Stomach (tissue), 19 donors: ENCODE measurements at regions of chr1 and their contacts with region 1.

Region 1: DNA sequence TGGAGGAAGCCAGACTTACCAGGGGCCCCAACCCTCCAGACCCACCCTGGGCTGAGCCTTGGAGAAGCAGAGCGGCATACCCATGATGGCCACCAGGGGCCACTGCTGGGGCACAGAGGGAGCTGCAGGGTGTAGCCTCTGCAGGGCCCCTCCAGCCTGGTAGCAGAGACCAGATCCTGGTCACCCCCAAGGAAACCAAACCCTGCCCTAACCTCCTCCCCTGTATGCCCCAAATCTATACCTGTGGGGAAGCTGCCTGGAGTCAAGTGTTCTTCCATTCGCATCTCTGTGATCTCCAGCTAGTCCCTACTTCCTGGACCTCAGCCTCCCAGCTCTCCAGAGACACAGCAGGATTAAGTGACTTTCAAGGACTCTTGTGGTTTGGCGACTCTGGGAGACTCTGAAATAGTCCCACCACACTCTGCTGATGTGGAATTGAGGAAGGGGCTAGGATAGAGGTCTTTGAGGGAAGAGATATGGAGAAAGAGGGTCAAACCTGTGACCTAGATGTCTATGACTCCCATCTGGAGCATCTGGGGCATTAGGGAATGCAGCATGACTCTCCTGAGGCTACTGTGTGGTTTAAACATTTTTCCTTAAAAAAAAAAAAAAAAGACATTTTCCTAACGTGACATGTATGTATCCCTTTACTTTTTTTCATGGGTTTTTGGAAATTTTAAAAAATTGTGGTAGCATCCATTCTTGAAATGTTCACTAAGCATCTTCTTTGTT is 119.2 kb upstream of the IPO9 start:
- DNase-seq: peak; percentile 74 to 83
- H3K4me3 ChIP-seq: no peak overlapping the region
- H3K27ac ChIP-seq: peak overlapping the region in 4 of 5 donors; percentile 14 to 90 (median 44)
- H3K4me1 ChIP-seq: peaks cover 22 to 48% (median 39%) of the 10 kb centered on the region in 4 donors
- H3K27me3 ChIP-seq: no peaks in the 10 kb centered on the region
- CTCF ChIP-seq: peak in 5 of 7 experiments; percentile 67 to 93 (median 86)
- EP300 ChIP-seq: no peak
- POLR2A ChIP-seq: no peak

Region 2: DNA sequence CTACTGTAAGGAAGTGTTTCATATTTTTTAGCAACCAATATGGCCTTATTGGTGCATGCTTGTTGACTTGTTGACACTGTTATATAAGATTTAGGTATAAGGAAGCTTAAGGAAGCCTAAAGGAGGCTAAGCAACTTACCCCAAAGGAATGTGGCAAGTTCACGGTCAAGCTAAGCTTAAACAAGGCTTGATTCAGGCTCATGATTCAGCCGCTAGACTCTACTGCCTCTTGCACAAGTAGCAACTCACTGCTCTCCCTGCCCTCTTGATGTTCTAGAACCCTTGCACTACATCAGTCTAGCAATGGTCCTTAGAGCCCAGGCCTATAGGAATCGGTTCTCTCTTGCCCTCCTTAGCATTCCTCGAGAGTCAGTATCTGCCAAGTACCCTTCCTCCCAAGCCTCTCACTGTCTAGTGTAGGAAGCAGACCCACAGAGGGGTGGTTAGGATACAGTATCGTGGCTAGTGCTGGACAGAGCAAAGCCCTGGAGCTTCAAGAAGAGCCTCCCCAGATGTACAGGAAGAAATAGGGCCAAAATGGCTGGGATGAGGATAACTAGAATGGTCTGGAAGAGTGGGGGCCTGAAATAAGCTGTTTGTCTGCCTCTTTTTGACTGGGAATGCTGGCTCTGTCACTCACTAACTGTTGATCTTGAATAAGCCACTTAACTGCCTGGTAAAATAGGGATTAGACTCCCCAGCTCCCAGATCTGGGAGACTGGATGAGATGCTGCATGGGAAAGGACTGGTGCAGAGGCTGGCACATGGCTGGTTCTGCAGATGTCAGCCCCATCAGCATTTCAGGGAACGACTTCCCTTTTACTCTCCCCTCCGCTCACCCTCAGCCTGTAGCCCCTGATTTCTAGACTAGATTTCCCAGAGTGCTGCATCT is 48.6 kb before region 1 on chr1:
- intact Hi-C with region 1: no loop called
- DNase-seq: no peak
- H3K4me3 ChIP-seq: no peak overlapping the region
- H3K27ac ChIP-seq: no peak overlapping the region
- H3K4me1 ChIP-seq: peaks cover 0 to 15% (median 9%) of the 10 kb centered on the region in 4 donors
- H3K27me3 ChIP-seq: no peaks in the 10 kb centered on the region
- CTCF ChIP-seq: no peak
- EP300 ChIP-seq: no peak
- POLR2A ChIP-seq: no peak

Region 3: GRCh38 chr1:201792534-201793305 is 83.0 kb after region 1 on chr1:
- intact Hi-C with region 1: loop called (anchors 2 kb)
- DNase-seq: peak; percentile 81 to 92
- H3K4me3 ChIP-seq: no peak overlapping the region
- H3K27ac ChIP-seq: peak overlapping the region in 4 of 5 donors; percentile 60 to 81 (median 76)
- H3K4me1 ChIP-seq: peaks cover 18 to 42% (median 34%) of the 10 kb centered on the region in 4 donors
- H3K27me3 ChIP-seq: no peaks in the 10 kb centered on the region
- CTCF ChIP-seq: peak in 5 of 7 experiments; percentile 89 to 100 (median 95)
- EP300 ChIP-seq: no peak
- POLR2A ChIP-seq: no peak